CD8-positive, alpha-beta T cell (primary cell): ENCODE measurements at regions of chr2 and their contacts with region 1.

Region 1: GRCh38 chr2:46364797-46365457 is 67.7 kb downstream of the EPAS1 start:
- DNase-seq: peak in 4 of 9 experiments; percentile 26 to 74 (median 52)
- ATAC-seq: peak; percentile 64
- H3K4me3 ChIP-seq: no peak overlapping the region
- H3K4me3 Mint-ChIP-seq: no peak overlapping the region
- H3K27ac ChIP-seq: no peak overlapping the region
- H3K27ac Mint-ChIP-seq: no peak overlapping the region
- H3K4me1 ChIP-seq: peaks cover 21% of the 10 kb centered on the region
- H3K4me1 Mint-ChIP-seq: peaks cover 43% of the 10 kb centered on the region
- H3K27me3 ChIP-seq: no peaks in the 10 kb centered on the region
- H3K27me3 Mint-ChIP-seq: no peaks in the 10 kb centered on the region
- CTCF ChIP-seq: peak; percentile 91

Region 2: GRCh38 chr2:45993476-45993991 is 371.4 kb before region 1 on chr2:
- CTCF ChIA-PET with region 1: interaction called, 6 read pairs
- POLR2A ChIA-PET with region 1: no interaction called
- intact Hi-C with region 1: loop called (anchors 1 kb)
- DNase-seq: peak; percentile 12 to 79 (median 58)
- ATAC-seq: peak; percentile 75
- H3K4me3 ChIP-seq: no peak overlapping the region
- H3K4me3 Mint-ChIP-seq: no peak overlapping the region
- H3K27ac ChIP-seq: no peak overlapping the region
- H3K27ac Mint-ChIP-seq: no peak overlapping the region
- H3K4me1 ChIP-seq: peaks cover 4% of the 10 kb centered on the region
- H3K4me1 Mint-ChIP-seq: peaks cover 5% of the 10 kb centered on the region
- H3K27me3 ChIP-seq: no peaks in the 10 kb centered on the region
- H3K27me3 Mint-ChIP-seq: no peaks in the 10 kb centered on the region
- CTCF ChIP-seq: peak; percentile 65

Region 3: DNA sequence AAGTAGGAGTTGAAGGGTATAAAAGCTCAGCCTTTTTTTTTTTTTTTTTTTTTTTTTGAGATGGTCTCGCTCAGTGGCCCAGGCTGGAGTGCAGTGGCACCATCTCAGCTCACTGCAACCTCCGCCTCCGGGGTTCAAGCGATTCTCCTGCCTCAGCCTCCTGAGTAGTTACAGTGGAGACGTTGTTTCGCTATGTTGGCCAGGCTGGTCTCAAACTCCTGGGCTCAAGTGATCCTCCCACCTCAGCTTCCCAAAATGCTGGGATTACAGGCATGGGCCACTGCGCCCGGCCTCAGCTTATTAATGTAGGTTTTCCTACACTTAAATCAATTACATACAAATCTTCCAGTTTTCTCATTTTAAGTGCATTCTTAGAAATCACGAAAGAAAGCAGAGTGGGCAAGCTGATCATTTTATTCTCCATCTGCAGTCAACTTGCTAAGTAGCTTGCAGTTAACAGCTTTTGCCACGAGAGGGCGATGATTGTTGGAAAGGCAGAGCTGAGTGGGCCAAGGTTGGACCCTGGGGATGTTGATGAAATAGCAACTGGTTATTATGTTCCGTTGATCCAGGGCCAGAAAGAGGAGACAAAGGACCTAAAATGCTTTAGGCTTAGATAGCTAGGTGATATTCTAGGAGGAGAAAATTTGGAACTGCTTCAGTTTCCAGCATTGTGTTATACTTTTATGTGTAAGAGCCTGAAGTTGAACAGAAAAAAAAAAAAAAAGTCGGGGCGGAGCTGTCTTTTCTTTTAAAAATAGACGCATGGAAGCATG is 302.1 kb before region 1 on chr2:
- CTCF ChIA-PET with region 1: interaction called, 28 read pairs
- POLR2A ChIA-PET with region 1: no interaction called
- intact Hi-C with region 1: loop called (anchors 1 kb)
- DNase-seq: peak; percentile 51 to 74 (median 70)
- ATAC-seq: peak; percentile 76
- H3K4me3 ChIP-seq: no peak overlapping the region
- H3K4me3 Mint-ChIP-seq: no peak overlapping the region
- H3K27ac ChIP-seq: no peak overlapping the region
- H3K27ac Mint-ChIP-seq: no peak overlapping the region
- H3K4me1 ChIP-seq: no peaks in the 10 kb centered on the region
- H3K4me1 Mint-ChIP-seq: peaks cover 3% of the 10 kb centered on the region
- H3K27me3 ChIP-seq: no peaks in the 10 kb centered on the region
- H3K27me3 Mint-ChIP-seq: peaks cover 3% of the 10 kb centered on the region
- CTCF ChIP-seq: peak; percentile 79

Region 4: GRCh38 chr2:46210063-46210462 is 154.9 kb before region 1 on chr2:
- CTCF ChIA-PET with region 1: no interaction called
- POLR2A ChIA-PET with region 1: no interaction called
- intact Hi-C with region 1: no loop called
- DNase-seq: no peak
- ATAC-seq: no peak
- H3K4me3 ChIP-seq: no peak overlapping the region
- H3K4me3 Mint-ChIP-seq: no peak overlapping the region
- H3K27ac ChIP-seq: no peak overlapping the region
- H3K27ac Mint-ChIP-seq: no peak overlapping the region
- H3K4me1 ChIP-seq: no peaks in the 10 kb centered on the region
- H3K4me1 Mint-ChIP-seq: no peaks in the 10 kb centered on the region
- H3K27me3 ChIP-seq: no peaks in the 10 kb centered on the region
- H3K27me3 Mint-ChIP-seq: no peaks in the 10 kb centered on the region
- CTCF ChIP-seq: no peak

Region 5: DNA sequence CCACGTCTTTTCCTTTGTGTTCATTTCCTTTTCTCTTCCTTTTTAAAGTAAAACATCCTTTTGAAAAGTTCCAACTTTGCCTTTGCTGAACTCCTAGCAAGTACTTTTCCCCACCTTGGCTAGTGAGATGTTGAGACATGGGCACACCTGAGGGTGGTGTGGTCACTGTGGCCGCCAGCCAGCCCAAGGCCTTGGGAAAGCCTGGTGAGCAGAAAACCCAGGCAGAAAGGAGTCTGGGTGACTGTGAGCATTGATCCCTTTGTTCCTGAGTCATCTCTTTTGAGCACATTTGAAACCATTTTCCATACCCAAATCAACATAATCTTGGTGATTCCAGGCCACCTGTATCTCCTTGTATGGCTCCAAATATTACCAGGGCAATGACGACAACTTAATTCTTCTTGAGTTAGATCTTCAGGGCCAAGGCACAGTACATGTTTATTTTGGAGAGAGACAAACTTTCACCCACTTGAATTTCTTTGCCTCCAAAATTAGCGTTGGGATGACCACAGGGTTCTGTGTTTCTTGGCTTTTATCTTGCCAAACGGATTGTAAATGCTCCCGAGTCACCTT is 53.2 kb before region 1 on chr2:
- CTCF ChIA-PET with region 1: no interaction called
- POLR2A ChIA-PET with region 1: no interaction called
- intact Hi-C with region 1: no loop called
- DNase-seq: no peak
- ATAC-seq: no peak
- H3K4me3 ChIP-seq: no peak overlapping the region
- H3K4me3 Mint-ChIP-seq: no peak overlapping the region
- H3K27ac ChIP-seq: no peak overlapping the region
- H3K27ac Mint-ChIP-seq: no peak overlapping the region
- H3K4me1 ChIP-seq: no peaks in the 10 kb centered on the region
- H3K4me1 Mint-ChIP-seq: no peaks in the 10 kb centered on the region
- H3K27me3 ChIP-seq: peaks cover 5 to 9% of the 10 kb centered on the region in 2 experiments
- H3K27me3 Mint-ChIP-seq: peaks cover 40% of the 10 kb centered on the region
- CTCF ChIP-seq: no peak

Region 6: DNA sequence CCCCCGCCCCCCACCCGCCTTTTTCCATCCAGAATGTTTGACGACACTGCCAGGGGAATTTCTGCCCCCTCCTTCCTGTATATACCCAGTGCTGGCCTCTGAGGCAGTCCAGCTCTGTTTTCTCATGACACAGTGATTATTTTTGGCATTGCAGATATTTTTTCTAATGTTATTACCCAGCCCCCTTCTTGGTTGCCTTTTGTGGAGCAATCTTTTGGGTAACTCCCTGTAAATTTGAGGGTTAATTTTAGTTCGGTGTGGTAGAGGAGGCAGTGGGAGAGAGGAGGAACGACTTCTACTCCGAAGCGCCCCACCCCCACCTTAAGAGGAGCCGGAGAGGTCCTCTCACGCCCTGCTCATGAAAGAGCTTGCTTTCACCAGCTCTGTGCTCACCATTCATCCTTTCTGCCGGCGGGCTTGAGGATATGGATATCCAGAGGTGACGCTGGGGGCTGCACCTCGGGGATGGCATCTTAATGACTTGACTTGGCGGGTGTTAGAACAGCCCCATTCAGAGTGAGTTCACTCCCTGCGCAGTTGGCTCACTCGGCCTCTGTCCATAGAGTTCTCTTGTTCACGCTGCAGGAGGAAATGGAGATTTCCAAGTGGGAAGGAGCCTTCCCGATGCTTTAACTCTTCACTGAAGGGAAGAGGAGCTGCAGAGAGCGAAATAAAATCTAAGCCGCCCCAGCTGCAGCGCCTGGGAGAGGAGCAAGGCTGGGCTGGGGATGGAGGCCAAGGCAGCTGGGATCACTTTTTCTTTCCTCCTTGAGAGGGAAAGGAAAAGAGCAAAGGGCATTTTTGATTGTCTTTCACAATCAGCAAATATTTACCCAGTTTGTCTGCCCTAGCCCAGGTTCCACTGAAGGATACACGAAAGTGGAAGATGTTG is 29.3 kb before region 1 on chr2:
- CTCF ChIA-PET with region 1: interaction called, 15 read pairs
- POLR2A ChIA-PET with region 1: no interaction called
- intact Hi-C with region 1: loop called in 1 of 2 experiments (anchors 1 kb)
- DNase-seq: no peak
- ATAC-seq: no peak
- H3K4me3 ChIP-seq: no peak overlapping the region
- H3K4me3 Mint-ChIP-seq: no peak overlapping the region
- H3K27ac ChIP-seq: no peak overlapping the region
- H3K27ac Mint-ChIP-seq: no peak overlapping the region
- H3K4me1 ChIP-seq: peaks cover 10% of the 10 kb centered on the region
- H3K4me1 Mint-ChIP-seq: peaks cover 17% of the 10 kb centered on the region
- H3K27me3 ChIP-seq: peaks cover 0 to 2% of the 10 kb centered on the region in 2 experiments
- H3K27me3 Mint-ChIP-seq: peaks cover 5% of the 10 kb centered on the region
- CTCF ChIP-seq: no peak

Region 7: GRCh38 chr2:46377176-46377581 is 12.3 kb after region 1 on chr2:
- CTCF ChIA-PET with region 1: interaction called, 10 read pairs
- POLR2A ChIA-PET with region 1: no interaction called
- intact Hi-C with region 1: no loop called
- DNase-seq: no peak
- ATAC-seq: no peak
- H3K4me3 ChIP-seq: no peak overlapping the region
- H3K4me3 Mint-ChIP-seq: no peak overlapping the region
- H3K27ac ChIP-seq: no peak overlapping the region
- H3K27ac Mint-ChIP-seq: no peak overlapping the region
- H3K4me1 ChIP-seq: no peaks in the 10 kb centered on the region
- H3K4me1 Mint-ChIP-seq: no peaks in the 10 kb centered on the region
- H3K27me3 ChIP-seq: no peaks in the 10 kb centered on the region
- H3K27me3 Mint-ChIP-seq: no peaks in the 10 kb centered on the region
- CTCF ChIP-seq: no peak

Region 8: GRCh38 chr2:46893269-46893945 is 528.5 kb after region 1 on chr2:
- CTCF ChIA-PET with region 1: no interaction called
- POLR2A ChIA-PET with region 1: no interaction called
- intact Hi-C with region 1: no loop called
- DNase-seq: no peak
- ATAC-seq: no peak
- H3K4me3 ChIP-seq: no peak overlapping the region
- H3K4me3 Mint-ChIP-seq: no peak overlapping the region
- H3K27ac ChIP-seq: no peak overlapping the region
- H3K27ac Mint-ChIP-seq: no peak overlapping the region
- H3K4me1 ChIP-seq: no peaks in the 10 kb centered on the region
- H3K4me1 Mint-ChIP-seq: peaks cover 2% of the 10 kb centered on the region
- H3K27me3 ChIP-seq: no peaks in the 10 kb centered on the region
- H3K27me3 Mint-ChIP-seq: no peaks in the 10 kb centered on the region
- CTCF ChIP-seq: no peak